ENCODE measurements at regions of chr6 and their contacts with region 1.

Region 1: DNA sequence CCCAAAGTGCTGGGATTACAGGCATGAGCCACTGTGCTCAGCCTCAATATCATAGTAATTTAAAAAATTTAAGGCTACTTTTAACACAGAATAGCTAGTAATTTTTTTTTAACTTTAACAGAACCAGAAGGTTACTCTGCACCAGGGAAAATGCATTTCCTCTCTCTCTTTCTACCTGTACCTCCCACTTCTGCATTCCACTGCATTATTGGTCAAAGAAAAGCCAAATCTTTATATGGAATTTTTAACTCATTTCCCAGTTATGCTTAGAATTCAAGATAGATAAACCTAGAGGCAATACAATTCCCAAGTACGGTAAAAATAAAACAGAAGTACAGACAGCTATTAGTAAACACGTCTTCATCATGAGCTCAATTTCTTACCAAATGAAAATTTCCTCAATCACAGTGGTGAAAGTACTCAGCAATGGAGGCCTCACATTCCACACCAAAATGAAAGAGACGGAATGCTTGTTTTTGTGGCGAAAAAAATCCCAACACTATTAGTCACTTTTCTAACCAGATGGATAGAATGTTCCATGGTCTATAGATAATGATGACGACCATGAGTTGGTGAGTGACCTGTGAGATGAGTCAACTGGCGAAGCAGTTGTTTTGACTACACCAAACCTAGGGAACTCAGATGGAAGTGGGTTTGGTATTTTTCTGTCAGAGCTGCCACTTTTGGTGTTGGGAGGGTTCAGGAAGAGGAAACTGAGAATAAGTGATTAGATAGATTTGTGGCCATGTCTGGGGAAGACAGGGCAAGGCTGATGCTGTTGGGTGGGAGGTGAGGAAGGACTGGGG is 104.7 kb upstream of the SGK1 start:
- DNase-seq: peak; percentile 81
- H3K4me3 ChIP-seq: no peak overlapping the region
- H3K27ac ChIP-seq: peak overlapping the region; percentile 90
- H3K4me1 ChIP-seq: peaks cover 68% of the 10 kb centered on the region
- H3K27me3 ChIP-seq: no peaks in the 10 kb centered on the region
- CTCF ChIP-seq: no peak
- POLR2A ChIP-seq: peak; percentile 61

Region 2: GRCh38 chr6:134288538-134289203 is 134.0 kb before region 1 on chr6:
- CTCF ChIA-PET with region 1: no interaction called
- POLR2A ChIA-PET with region 1: no interaction called
- dilution Hi-C with region 1: no loop called
- intact Hi-C with region 1: loop called (anchors 1 kb)
- DNase-seq: peak; percentile 74
- H3K4me3 ChIP-seq: no peak overlapping the region
- H3K27ac ChIP-seq: peak overlapping the region; percentile 100
- H3K4me1 ChIP-seq: peaks cover 25% of the 10 kb centered on the region
- H3K27me3 ChIP-seq: no peaks in the 10 kb centered on the region
- CTCF ChIP-seq: no peak
- POLR2A ChIP-seq: peak; percentile 30

Region 3: GRCh38 chr6:134295953-134296553 is 126.6 kb before region 1 on chr6:
- CTCF ChIA-PET with region 1: interaction called, 5 read pairs
- POLR2A ChIA-PET with region 1: interaction called, 3 read pairs
- dilution Hi-C with region 1: no loop called
- intact Hi-C with region 1: loop called (anchors 1 kb)
- DNase-seq: peak; percentile 94
- H3K4me3 ChIP-seq: no peak overlapping the region
- H3K27ac ChIP-seq: peak overlapping the region; percentile 99
- H3K4me1 ChIP-seq: peaks cover 23% of the 10 kb centered on the region
- H3K27me3 ChIP-seq: no peaks in the 10 kb centered on the region
- CTCF ChIP-seq: no peak
- POLR2A ChIP-seq: peak; percentile 81

Region 4: DNA sequence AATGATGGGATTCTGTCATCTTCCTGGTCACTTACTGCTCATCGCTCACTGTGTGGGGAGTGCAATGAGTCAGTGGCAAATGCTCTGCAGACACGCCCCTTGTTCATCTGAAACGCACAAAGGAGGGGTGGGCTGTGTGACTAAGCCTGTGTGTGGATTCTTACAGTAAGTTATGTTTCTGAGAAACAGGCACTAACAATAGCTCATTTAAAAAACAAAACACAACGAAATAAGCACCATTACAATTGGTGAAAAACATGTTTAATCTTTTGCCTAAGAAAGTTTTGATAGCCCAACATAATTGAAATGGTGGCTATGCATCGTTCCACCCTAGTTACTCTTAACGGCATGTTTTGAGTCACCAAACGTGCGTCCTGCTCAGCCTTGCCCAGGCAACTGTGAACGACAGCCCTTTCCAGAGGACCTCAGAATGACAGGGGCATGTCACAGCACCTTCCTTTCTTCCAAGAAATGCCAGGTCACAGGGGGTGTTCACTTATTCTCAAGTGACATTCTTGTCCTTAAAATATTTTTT is 13.7 kb after region 1 on chr6:
- CTCF ChIA-PET with region 1: interaction called, 6 read pairs
- POLR2A ChIA-PET with region 1: no interaction called
- dilution Hi-C with region 1: no loop called
- intact Hi-C with region 1: loop called (anchors 1 kb)
- DNase-seq: peak; percentile 94
- H3K4me3 ChIP-seq: peak overlapping the region in 1 of 3 experiments; percentile 3
- H3K27ac ChIP-seq: peak overlapping the region; percentile 88
- H3K4me1 ChIP-seq: peaks cover 20% of the 10 kb centered on the region
- H3K27me3 ChIP-seq: no peaks in the 10 kb centered on the region
- CTCF ChIP-seq: no peak
- POLR2A ChIP-seq: no peak

Region 5: DNA sequence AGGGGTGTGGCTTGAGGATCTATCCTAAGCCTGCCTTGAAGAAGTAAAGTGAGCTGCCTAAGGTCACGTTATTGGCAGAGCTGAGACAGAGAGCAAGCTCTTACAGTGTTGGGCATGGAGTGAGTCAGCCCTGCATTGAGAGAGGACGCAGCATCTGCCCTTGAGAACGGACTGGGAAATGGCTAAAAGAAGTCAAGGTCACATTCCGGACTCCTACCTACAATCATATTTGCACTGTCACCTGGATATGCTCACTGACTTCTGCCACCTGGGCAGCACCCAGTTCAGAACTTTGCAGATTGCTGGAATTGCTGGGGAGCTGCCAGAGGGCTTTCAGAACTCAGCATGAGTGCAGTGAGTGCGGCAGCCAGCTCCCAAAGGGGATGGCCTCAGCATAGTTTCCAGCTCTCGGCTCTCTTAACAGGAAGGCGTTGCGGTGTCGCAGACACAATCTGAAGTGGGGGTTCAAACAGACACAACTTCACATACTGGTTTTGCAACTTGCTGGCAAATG is 94.6 kb after region 1 on chr6:
- CTCF ChIA-PET with region 1: no interaction called
- POLR2A ChIA-PET with region 1: no interaction called
- dilution Hi-C with region 1: no loop called
- intact Hi-C with region 1: loop called (anchors 2 kb)
- DNase-seq: peak; percentile 75
- H3K4me3 ChIP-seq: no peak overlapping the region
- H3K27ac ChIP-seq: peak overlapping the region; percentile 65
- H3K4me1 ChIP-seq: peaks cover 38% of the 10 kb centered on the region
- H3K27me3 ChIP-seq: no peaks in the 10 kb centered on the region
- CTCF ChIP-seq: no peak
- POLR2A ChIP-seq: no peak

Region 6: GRCh38 chr6:134609716-134610261 is 187.2 kb after region 1 on chr6:
- CTCF ChIA-PET with region 1: no interaction called
- POLR2A ChIA-PET with region 1: no interaction called
- dilution Hi-C with region 1: no loop called
- intact Hi-C with region 1: no loop called
- DNase-seq: no peak
- H3K4me3 ChIP-seq: no peak overlapping the region
- H3K27ac ChIP-seq: no peak overlapping the region
- H3K4me1 ChIP-seq: no peaks in the 10 kb centered on the region
- H3K27me3 ChIP-seq: no peaks in the 10 kb centered on the region
- CTCF ChIP-seq: no peak
- POLR2A ChIP-seq: no peak

Region 7: GRCh38 chr6:134720353-134721059 is 297.9 kb after region 1 on chr6:
- CTCF ChIA-PET with region 1: no interaction called
- POLR2A ChIA-PET with region 1: no interaction called
- dilution Hi-C with region 1: no loop called
- intact Hi-C with region 1: loop called (anchors 1 kb)
- DNase-seq: peak; percentile 94
- H3K4me3 ChIP-seq: no peak overlapping the region
- H3K27ac ChIP-seq: peak overlapping the region; percentile 74
- H3K4me1 ChIP-seq: peaks cover 37% of the 10 kb centered on the region
- H3K27me3 ChIP-seq: no peaks in the 10 kb centered on the region
- CTCF ChIP-seq: no peak
- POLR2A ChIP-seq: peak; percentile 61

Region 8: GRCh38 chr6:134816780-134817179 is 394.2 kb after region 1 on chr6:
- CTCF ChIA-PET with region 1: no interaction called
- POLR2A ChIA-PET with region 1: no interaction called
- dilution Hi-C with region 1: no loop called
- intact Hi-C with region 1: no loop called
- DNase-seq: no peak
- H3K4me3 ChIP-seq: no peak overlapping the region
- H3K27ac ChIP-seq: no peak overlapping the region
- H3K4me1 ChIP-seq: no peaks in the 10 kb centered on the region
- H3K27me3 ChIP-seq: no peaks in the 10 kb centered on the region
- CTCF ChIP-seq: no peak
- POLR2A ChIP-seq: no peak